Activated CD8-positive, alpha-beta T cell treated with anti-CD3 and anti-CD28 coated beads for 36 hours (primary cell): ENCODE measurements at regions of chr10 and their contacts with region 1.

Region 1: DNA sequence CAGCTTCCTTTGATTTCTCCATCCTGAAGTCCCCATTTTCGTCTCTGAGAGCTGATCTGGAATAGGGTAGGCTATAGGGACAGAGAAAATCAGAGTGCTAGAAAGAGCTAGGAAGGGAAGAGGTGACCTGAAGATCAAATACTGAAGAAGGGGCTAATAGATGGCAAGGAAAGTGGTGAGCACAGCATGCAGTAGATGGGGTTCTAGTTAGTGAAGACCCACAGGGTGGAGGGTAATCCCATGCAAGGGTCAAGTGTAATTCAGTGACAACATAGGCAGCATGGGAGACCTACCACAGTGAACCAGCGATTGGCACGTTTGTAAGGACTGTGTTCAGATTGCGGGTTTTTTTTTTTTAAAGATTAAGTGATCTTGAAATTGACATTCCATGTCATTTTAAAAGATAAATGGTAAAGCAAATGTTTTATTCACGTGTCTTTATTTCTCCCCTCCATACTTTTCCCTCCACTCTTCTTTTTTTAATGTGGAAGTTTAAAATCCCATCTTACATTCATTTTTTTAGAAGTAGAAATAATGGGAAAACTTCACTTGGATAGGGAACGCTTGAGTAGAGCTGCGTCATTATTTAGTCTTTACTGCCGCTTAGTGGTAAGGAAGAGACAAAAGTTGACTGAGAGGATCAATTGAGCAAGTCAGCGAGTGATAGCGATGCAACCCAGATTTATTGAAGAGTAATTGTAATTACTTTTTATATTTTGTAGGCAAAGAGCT is 21.0 kb upstream of the ABI1 start:
- DNase-seq: no peak
- ATAC-seq: peak; percentile 51
- H3K4me3 Mint-ChIP-seq: no peak overlapping the region
- H3K27ac Mint-ChIP-seq: no peak overlapping the region
- H3K4me1 Mint-ChIP-seq: peaks cover 3% of the 10 kb centered on the region
- H3K27me3 Mint-ChIP-seq: peaks cover 7% of the 10 kb centered on the region
- CTCF ChIP-seq: peak; percentile 82

Region 2: GRCh38 chr10:26334932-26335573 is 546.7 kb before region 1 on chr10:
- CTCF ChIA-PET with region 1: interaction called, 15 read pairs
- POLR2A ChIA-PET with region 1: no interaction called
- intact Hi-C with region 1: loop called (anchors 5 kb)
- DNase-seq: peak; percentile 75
- ATAC-seq: peak; percentile 94
- H3K4me3 Mint-ChIP-seq: peak overlapping the region; percentile 69
- H3K27ac Mint-ChIP-seq: peak overlapping the region; percentile 78
- H3K4me1 Mint-ChIP-seq: peaks cover 9% of the 10 kb centered on the region
- H3K27me3 Mint-ChIP-seq: no peaks in the 10 kb centered on the region
- CTCF ChIP-seq: peak; percentile 93

Region 3: GRCh38 chr10:26685441-26685840 is 196.3 kb before region 1 on chr10:
- CTCF ChIA-PET with region 1: interaction called, 13 read pairs
- POLR2A ChIA-PET with region 1: no interaction called
- intact Hi-C with region 1: no loop called
- DNase-seq: no peak
- ATAC-seq: no peak
- H3K4me3 Mint-ChIP-seq: peak overlapping the region; percentile 21
- H3K27ac Mint-ChIP-seq: no peak overlapping the region
- H3K4me1 Mint-ChIP-seq: peaks cover 33% of the 10 kb centered on the region
- H3K27me3 Mint-ChIP-seq: no peaks in the 10 kb centered on the region
- CTCF ChIP-seq: no peak

Region 4: DNA sequence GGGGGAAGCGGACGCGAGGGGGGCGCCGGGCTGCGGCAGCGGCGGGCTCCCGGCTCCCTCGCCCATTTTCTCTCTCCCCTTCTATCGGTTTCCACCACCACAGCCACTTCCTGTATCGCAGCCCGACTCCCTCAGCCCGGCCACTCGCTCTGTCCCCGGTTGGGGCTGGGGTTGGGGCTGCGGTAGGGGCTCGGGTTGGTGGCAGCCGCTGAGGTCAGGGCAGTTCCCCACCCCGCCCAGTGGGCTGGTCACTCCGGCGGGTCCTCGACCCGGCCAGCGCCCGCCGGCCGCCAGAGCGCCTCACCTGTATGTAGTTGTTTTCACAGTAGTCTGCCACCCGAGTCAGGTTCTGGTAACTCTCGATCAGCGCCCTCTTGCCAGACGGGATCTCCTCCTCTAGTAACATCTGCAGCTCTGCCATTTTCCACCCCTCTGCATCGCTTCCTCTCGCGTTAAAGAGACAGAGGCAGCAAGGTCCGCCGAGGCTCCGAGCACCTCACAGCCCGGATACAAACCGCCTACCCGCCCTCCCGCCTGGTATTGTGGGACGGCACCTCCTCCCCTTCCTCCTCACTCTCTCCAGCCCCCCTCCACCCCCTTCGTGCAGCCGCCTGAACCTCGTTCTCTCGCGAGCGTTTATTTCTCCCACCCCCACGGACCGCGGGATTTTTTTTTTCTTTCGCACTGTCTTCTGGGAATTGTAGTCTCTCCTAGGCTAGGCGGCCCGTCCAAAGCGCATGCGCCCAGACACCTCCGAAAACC is 21.1 kb before region 1 on chr10 and contains the start of gene ABI1:
- CTCF ChIA-PET with region 1: interaction called, 19 read pairs
- POLR2A ChIA-PET with region 1: interaction called, 3 read pairs
- intact Hi-C with region 1: no loop called
- DNase-seq: peak; percentile 99
- ATAC-seq: peak; percentile 93
- H3K4me3 Mint-ChIP-seq: peak within 1 kb of the TSS; percentile 90
- H3K27ac Mint-ChIP-seq: peak within 1 kb of the TSS; percentile 100
- H3K4me1 Mint-ChIP-seq: peaks cover 23% of the 10 kb centered on the region
- H3K27me3 Mint-ChIP-seq: peaks cover 3% of the 10 kb centered on the region
- CTCF ChIP-seq: no peak
- total RNA-seq, gene ABI1: 32.4 to 37.2 TPM

Region 5: GRCh38 chr10:26869528-26869927 is 12.2 kb before region 1 on chr10:
- CTCF ChIA-PET with region 1: interaction called, 15 read pairs
- POLR2A ChIA-PET with region 1: no interaction called
- intact Hi-C with region 1: no loop called
- DNase-seq: peak; percentile 55
- ATAC-seq: peak; percentile 71
- H3K4me3 Mint-ChIP-seq: no peak overlapping the region
- H3K27ac Mint-ChIP-seq: no peak overlapping the region
- H3K4me1 Mint-ChIP-seq: peaks cover 6% of the 10 kb centered on the region
- H3K27me3 Mint-ChIP-seq: no peaks in the 10 kb centered on the region
- CTCF ChIP-seq: no peak

Region 6: GRCh38 chr10:27019827-27020226 is 138.1 kb after region 1 on chr10:
- CTCF ChIA-PET with region 1: no interaction called
- POLR2A ChIA-PET with region 1: no interaction called
- intact Hi-C with region 1: no loop called
- DNase-seq: no peak
- ATAC-seq: no peak
- H3K4me3 Mint-ChIP-seq: no peak overlapping the region
- H3K27ac Mint-ChIP-seq: no peak overlapping the region
- H3K4me1 Mint-ChIP-seq: peaks cover 11% of the 10 kb centered on the region
- H3K27me3 Mint-ChIP-seq: no peaks in the 10 kb centered on the region
- CTCF ChIP-seq: no peak

Region 7: DNA sequence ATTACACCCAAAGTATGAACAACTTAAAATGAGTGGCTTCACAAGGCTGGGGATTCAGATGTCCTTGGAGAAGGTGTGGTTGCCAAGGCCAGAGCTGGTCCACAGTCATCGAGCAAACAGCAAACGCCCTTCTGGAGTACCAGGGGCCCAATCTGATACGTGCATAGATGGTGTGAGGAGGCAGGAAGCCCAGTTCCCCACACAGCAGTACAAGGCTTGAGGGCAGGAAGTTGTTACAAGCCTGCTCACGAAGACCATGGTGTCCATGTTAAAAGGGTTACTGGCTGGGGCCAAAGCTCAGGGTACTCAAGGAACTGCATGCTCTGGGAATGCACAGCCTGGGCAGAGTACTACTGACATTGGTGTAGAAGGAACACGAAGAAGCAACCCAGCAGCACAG is 223.2 kb after region 1 on chr10:
- CTCF ChIA-PET with region 1: no interaction called
- POLR2A ChIA-PET with region 1: no interaction called
- intact Hi-C with region 1: no loop called
- DNase-seq: peak; percentile 57
- ATAC-seq: peak; percentile 28
- H3K4me3 Mint-ChIP-seq: no peak overlapping the region
- H3K27ac Mint-ChIP-seq: peak overlapping the region; percentile 87
- H3K4me1 Mint-ChIP-seq: peaks cover 40% of the 10 kb centered on the region
- H3K27me3 Mint-ChIP-seq: peaks cover 1% of the 10 kb centered on the region
- CTCF ChIP-seq: no peak